ENCODE measurements at regions of chr11 and their contacts with region 1.

Region 1: GRCh38 chr11:126194121-126194543 is 17.3 kb downstream of the RPUSD4 start:
- DNase-seq: peak; percentile 66
- H3K4me3 Mint-ChIP-seq: no peak overlapping the region
- H3K27ac Mint-ChIP-seq: no peak overlapping the region
- H3K4me1 Mint-ChIP-seq: no peaks in the 10 kb centered on the region
- H3K27me3 Mint-ChIP-seq: no peaks in the 10 kb centered on the region

Region 2: GRCh38 chr11:125923012-125923579 is 271.0 kb before region 1 on chr11:
- CTCF ChIA-PET with region 1: interaction called, 38 read pairs
- DNase-seq: peak; percentile 74
- H3K4me3 Mint-ChIP-seq: no peak overlapping the region
- H3K27ac Mint-ChIP-seq: no peak overlapping the region
- H3K4me1 Mint-ChIP-seq: no peaks in the 10 kb centered on the region
- H3K27me3 Mint-ChIP-seq: peaks cover 30% of the 10 kb centered on the region

Region 3: DNA sequence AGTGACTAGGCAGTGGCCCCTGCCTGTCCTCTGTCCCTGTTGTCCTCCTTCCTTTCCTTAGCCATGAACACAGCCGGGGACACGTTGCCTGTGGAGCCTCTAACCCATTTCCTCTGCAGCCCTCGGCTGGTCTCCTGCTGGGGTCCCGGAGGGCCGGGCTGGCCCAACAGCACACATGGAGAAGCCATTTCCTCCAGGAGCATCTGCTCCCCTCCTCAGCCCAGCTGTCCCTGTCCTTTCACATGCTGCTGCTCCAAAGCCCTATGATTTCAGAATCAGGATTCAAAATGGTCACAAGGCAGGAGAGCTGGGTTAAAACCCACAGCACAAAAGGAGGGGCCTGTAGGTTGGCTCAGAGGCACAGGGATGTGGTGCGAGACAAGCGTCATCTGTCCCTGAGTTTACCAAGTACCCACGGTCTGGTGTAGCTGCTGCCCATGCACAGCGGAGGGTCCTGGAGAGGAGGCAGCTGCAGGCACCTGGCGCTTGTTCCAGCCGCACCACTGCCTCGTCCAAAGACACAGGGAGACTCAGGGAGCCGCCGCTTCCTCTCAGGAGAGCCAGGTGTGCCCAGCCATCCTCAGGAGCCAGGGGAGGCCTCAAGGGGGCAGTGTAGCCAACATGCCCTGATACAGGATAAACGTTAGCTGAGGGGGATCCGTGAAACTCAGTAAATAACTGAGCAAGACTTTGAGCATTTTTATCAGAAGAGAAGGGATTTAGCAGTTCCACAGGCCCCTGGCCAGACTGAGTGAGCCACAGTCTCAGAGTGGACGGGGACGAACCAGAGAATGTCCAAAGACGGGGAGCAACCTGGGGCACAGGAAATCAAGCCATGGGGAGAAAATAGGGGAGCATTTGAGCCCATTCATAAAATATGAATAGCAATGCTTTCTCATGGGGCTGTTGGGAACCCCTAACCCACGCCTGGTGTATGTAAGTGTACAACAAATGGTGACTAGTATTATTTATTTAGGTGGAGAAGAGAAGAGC is 252.2 kb before region 1 on chr11:
- CTCF ChIA-PET with region 1: interaction called, 79 read pairs
- DNase-seq: peak; percentile 73
- H3K4me3 Mint-ChIP-seq: no peak overlapping the region
- H3K27ac Mint-ChIP-seq: no peak overlapping the region
- H3K4me1 Mint-ChIP-seq: peaks cover 21% of the 10 kb centered on the region
- H3K27me3 Mint-ChIP-seq: peaks cover 14% of the 10 kb centered on the region

Region 4: GRCh38 chr11:126303623-126304456 is 109.7 kb after region 1 on chr11 and contains the start of gene DCPS:
- CTCF ChIA-PET with region 1: no interaction called
- DNase-seq: peak; percentile 89
- H3K4me3 Mint-ChIP-seq: peak within 1 kb of the TSS; percentile 76
- H3K27ac Mint-ChIP-seq: peak within 1 kb of the TSS; percentile 94
- H3K4me1 Mint-ChIP-seq: peaks cover 37% of the 10 kb centered on the region
- H3K27me3 Mint-ChIP-seq: no peaks in the 10 kb centered on the region